Vagina (tissue), 2 donors: ENCODE measurements at regions of chr11 and their contacts with region 1.

Region 1: DNA sequence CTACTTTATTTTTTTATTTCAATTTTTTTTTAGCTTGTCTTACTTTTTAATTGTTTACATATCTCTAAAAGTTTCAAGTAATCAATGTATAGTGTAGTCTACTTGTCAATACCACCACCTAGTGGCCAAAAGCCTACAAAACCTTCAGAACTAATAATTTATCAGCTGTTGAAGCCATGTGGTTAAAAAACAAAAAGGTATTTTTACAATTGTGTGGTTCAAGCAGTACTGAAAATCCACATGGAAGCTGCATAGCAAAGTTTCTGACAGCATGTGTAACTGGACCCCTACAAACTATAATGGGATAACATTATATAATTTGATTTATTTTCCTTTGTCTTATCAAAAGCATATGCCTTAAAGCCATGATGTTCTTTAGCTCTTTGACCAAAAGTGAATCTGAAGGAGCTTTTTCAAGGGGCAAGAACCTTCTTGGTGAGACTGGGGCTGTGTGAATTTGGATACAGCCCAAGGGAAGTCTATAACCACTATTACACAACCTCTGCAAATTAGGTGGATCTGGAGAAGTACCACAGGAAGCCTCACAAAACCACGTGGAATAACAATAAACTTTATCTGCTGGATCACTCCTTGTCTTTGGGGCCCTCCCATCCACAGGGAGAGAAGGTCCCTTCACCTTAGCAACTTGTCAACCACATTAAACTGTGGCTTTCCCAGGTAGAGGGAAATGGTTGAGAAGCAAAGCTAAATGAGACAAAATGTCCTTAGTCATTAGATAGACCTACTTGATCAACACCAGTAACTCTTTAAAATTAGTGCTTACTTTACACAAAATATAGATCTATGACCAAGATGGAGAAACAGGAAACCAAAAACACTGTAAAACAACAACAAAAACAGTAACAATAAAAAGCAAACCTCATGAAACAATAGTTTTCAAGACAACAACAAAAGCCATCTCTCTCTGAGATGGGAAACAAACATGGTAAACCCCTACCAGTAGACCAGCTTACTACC is 9.9 kb downstream of the NARS2 start:
- DNase-seq: no peak
- H3K4me3 ChIP-seq: no peak overlapping the region
- H3K27ac ChIP-seq: peak overlapping the region; percentile 39
- H3K4me1 ChIP-seq: peaks cover 39% of the 10 kb centered on the region
- H3K27me3 ChIP-seq: no peaks in the 10 kb centered on the region
- CTCF ChIP-seq: peak; percentile 44 to 72 (median 51)
- POLR2A ChIP-seq: no peak

Region 2: DNA sequence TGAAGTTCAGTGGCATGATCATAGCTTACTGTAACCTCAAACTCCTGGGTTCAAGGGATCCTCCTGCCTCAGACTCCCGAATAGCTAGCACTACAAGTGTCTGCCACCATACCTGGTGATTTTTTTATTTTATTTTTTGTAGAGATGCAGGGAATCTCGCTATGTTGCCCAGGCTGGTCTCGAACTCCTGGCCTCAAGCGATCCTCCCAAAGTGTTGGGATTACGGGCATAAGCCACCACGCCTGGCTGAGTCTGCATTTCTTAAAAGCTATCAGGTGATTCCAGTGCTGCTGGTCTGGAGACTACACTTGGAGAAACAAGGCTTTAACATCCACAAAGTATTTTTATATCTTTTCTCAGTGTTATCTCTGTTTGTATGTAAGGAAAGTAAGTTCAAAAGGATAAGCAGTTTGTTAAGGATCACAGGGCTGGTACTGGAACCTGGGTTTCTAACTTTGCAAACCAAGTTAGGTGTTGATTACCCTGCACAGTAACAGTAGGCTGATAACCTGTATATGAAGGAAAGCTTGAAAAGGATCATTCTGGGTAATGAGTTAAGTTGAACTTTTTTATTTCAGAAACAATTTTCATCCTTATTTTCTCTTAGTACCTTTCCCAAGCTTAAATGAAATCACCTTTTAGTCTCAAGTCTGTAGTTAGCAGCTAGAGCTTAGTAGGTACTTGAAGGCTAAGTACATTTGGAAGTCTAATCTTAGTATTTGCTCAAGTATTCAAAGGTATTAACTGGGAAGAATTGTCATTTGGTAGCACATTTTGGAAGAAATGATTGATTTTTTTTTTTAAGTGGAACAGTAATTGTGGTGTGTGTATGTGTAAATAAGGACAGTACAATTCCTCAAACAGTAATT is 1691.6 kb before region 1 on chr11:
- intact Hi-C with region 1: no loop called
- DNase-seq: no peak
- H3K4me3 ChIP-seq: no peak overlapping the region
- H3K27ac ChIP-seq: no peak overlapping the region
- H3K4me1 ChIP-seq: no peaks in the 10 kb centered on the region
- H3K27me3 ChIP-seq: no peaks in the 10 kb centered on the region
- CTCF ChIP-seq: no peak
- POLR2A ChIP-seq: no peak

Region 3: GRCh38 chr11:78139422-78140391 is 425.1 kb before region 1 on chr11 and contains the start of gene ALG8:
- intact Hi-C with region 1: loop called (anchors 10 kb)
- DNase-seq: peak in 1 of 2 donors; percentile 93
- H3K4me3 ChIP-seq: peak within 1 kb of the TSS; percentile 66 to 89
- H3K27ac ChIP-seq: peak within 1 kb of the TSS; percentile 34
- H3K4me1 ChIP-seq: peaks cover 20% of the 10 kb centered on the region
- H3K27me3 ChIP-seq: no peaks in the 10 kb centered on the region
- CTCF ChIP-seq: no peak
- POLR2A ChIP-seq: no peak
- total RNA-seq, gene ALG8: 20.9 TPM

Region 4: DNA sequence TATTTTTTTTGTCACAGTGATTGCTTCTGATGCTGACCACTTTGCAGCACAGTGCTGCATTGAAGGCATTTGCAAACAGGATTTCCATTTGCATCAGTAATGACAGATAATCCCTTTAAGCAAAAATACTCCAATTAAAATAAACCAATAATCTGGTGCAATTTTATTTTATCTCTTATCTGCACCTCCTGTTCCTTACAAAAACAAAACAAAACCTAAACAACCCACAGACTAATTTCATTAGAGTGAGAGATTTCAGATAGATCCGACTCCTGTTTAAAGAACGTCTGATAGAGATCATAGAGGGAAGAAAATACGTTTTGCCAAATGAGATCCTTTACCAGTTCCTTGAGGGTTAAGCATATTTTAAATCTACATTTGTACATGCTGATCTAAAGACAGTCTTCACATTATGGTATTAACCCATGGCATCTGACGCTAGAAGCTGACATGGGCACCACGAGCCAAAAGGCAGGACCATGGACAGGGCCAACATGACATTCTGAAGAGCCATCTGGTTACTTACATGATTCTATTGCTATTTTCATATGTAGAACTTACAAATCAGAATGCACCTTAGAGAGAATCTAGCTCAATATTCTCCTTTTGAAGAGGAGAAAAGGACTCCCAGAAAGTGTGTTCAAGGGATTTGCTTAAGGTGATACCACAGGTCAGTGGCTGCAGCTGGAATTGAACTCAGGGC is 296.1 kb after region 1 on chr11:
- intact Hi-C with region 1: no loop called
- DNase-seq: no peak
- H3K4me3 ChIP-seq: no peak overlapping the region
- H3K27ac ChIP-seq: no peak overlapping the region
- H3K4me1 ChIP-seq: no peaks in the 10 kb centered on the region
- H3K27me3 ChIP-seq: no peaks in the 10 kb centered on the region
- CTCF ChIP-seq: no peak
- POLR2A ChIP-seq: no peak